MCF 10A (cell line): ENCODE measurements at regions of chr14 and their contacts with region 1.

Region 1: DNA sequence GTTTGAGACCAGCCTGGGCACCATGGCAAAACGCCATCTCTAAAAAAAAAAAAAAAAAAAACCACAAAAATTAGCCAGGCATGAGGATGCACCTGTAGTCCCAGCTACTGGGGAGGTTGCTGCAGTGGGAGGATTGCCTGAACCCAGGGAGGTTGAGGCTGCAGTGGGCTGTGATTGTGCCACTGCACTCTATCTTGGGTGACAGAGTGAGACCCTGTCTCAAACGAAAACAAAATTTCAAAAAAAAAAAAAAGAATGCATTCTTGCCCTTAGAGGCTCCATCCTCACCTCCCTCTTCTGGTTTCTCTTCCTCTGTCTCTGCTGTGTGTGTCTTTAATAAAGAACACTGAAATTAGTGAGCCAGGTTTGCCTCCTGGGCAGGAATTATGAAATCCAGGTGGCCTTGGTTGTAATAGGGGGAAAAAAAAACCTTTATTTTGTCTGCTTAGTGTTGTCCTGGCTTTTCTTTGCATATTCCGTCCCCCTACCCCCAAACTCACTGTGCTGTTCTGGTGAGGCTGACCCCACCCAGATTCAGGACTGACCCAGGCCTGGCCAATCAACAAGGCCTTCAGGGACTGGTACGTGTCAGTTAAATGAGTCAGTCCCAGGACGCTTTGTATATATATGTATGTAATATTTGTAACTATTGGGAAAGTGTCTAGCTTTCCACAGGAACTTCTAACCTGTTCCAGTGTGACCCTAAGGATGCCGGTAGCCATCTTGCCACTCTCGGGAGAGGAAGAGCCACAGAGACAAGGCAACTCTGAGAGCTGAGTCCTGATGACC is 107.6 kb downstream of the VCPKMT start:
- DNase-seq: peak; percentile 96
- H3K4me3 Mint-ChIP-seq: peak overlapping the region; percentile 69
- H3K27ac Mint-ChIP-seq: peak overlapping the region; percentile 96
- H3K4me1 Mint-ChIP-seq: peaks cover 29% of the 10 kb centered on the region
- H3K27me3 Mint-ChIP-seq: no peaks in the 10 kb centered on the region
- CTCF ChIP-seq: no peak

Region 2: GRCh38 chr14:49959822-49960408 is 48.8 kb before region 1 on chr14:
- CTCF ChIA-PET with region 1: interaction called, 7 read pairs
- POLR2A ChIA-PET with region 1: interaction called, 222 read pairs
- intact Hi-C with region 1: loop called (anchors 5 kb)
- DNase-seq: no peak
- H3K4me3 Mint-ChIP-seq: no peak overlapping the region
- H3K27ac Mint-ChIP-seq: no peak overlapping the region
- H3K4me1 Mint-ChIP-seq: peaks cover 31% of the 10 kb centered on the region
- H3K27me3 Mint-ChIP-seq: no peaks in the 10 kb centered on the region
- CTCF ChIP-seq: no peak

Region 3: GRCh38 chr14:49971156-49972130 is 37.3 kb before region 1 on chr14:
- CTCF ChIA-PET with region 1: interaction called, 36 read pairs
- POLR2A ChIA-PET with region 1: interaction called, 27 read pairs
- intact Hi-C with region 1: no loop called
- DNase-seq: peak; percentile 80
- H3K4me3 Mint-ChIP-seq: peak overlapping the region; percentile 58
- H3K27ac Mint-ChIP-seq: peak overlapping the region; percentile 89
- H3K4me1 Mint-ChIP-seq: peaks cover 48% of the 10 kb centered on the region
- H3K27me3 Mint-ChIP-seq: no peaks in the 10 kb centered on the region
- CTCF ChIP-seq: no peak

Region 4: DNA sequence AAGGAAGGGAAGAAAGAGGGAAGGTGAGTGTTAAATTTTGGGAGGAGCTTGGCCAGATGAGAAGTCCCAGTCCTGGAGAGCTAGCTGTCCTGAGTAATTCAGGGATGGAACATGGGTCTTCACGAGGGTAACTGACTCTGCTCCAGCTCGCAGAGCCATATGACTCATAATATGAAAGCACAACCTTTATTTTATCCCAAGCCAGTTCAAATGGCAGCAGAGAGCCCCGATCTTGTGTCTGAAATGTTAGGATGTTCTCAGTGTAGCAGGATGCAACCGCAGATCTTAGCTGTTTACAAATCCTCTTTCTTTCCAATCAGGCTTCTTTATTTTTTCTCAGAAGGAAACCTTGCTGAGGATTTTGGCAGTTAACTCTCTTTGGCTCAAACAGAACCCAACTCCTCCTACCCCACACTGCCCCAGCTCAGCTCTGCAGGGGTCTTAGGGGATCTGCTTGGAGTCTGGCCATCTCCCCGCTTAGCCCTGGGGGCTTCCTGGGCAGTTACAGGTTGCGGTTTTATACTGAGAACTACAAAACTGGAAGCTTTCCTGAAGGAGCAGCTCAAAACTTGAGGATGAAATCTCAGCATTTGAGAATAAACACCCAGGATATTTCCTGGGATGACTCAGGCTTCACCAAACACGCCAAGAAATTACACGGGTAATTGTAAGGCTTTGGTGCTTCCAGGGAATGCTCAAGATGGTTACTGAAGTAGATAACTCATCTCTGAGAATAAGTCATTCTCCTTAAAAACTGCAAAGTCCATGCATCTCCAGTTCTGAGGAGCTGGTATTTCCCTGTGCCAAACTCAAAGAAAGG is 15.1 kb after region 1 on chr14:
- CTCF ChIA-PET with region 1: interaction called, 10 read pairs
- POLR2A ChIA-PET with region 1: interaction called, 44 read pairs
- intact Hi-C with region 1: no loop called
- DNase-seq: peak; percentile 78
- H3K4me3 Mint-ChIP-seq: no peak overlapping the region
- H3K27ac Mint-ChIP-seq: peak overlapping the region; percentile 90
- H3K4me1 Mint-ChIP-seq: peaks cover 15% of the 10 kb centered on the region
- H3K27me3 Mint-ChIP-seq: no peaks in the 10 kb centered on the region
- CTCF ChIP-seq: no peak

Region 5: GRCh38 chr14:50038398-50039119 is 29.8 kb after region 1 on chr14:
- CTCF ChIA-PET with region 1: interaction called, 4 read pairs
- POLR2A ChIA-PET with region 1: interaction called, 95 read pairs
- intact Hi-C with region 1: loop called (anchors 1 kb)
- DNase-seq: peak; percentile 94
- H3K4me3 Mint-ChIP-seq: peak overlapping the region; percentile 40
- H3K27ac Mint-ChIP-seq: peak overlapping the region; percentile 89
- H3K4me1 Mint-ChIP-seq: peaks cover 43% of the 10 kb centered on the region
- H3K27me3 Mint-ChIP-seq: no peaks in the 10 kb centered on the region
- CTCF ChIP-seq: peak; percentile 16

Region 6: DNA sequence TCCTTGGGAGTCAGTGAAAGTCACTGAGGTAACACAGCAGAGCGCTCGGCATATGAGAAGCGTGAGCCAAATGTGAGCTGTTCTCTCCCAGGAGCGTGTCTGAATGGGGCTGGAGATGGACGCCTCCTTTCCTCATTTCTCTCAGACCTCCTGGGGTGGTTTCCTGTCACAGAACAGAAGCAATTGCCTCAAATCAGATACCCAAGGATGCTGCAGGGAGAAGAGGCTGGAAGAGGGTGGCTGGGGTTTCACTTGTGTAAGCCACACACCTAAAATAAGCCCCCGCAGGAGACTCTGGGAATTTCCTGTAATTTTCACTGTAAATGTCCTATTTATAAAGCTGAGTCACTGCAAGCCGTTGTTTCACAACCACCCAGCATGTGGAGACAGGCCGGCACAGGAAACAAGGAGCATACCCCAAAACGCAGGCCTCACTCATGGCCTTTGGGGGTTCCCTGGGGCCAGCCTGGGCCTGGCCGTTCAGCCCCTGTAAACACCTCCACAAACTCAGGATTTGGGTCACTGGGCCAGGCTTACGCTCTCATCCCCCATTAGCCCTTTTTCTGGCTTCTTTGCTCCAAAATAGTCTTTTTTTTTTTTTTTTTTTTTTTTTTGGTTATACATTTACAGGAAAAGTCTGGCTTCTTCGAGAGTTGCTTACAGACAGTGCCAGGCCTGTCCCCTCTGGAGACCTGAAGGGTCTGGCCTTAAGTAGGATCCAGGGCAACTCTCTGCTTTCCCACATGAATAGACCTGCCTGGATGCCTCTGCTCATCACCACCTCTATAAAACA is 52.3 kb after region 1 on chr14:
- CTCF ChIA-PET with region 1: interaction called, 6 read pairs
- POLR2A ChIA-PET with region 1: interaction called, 17 read pairs
- intact Hi-C with region 1: loop called (anchors 2 kb)
- DNase-seq: peak; percentile 96
- H3K4me3 Mint-ChIP-seq: no peak overlapping the region
- H3K27ac Mint-ChIP-seq: peak overlapping the region; percentile 84
- H3K4me1 Mint-ChIP-seq: peaks cover 20% of the 10 kb centered on the region
- H3K27me3 Mint-ChIP-seq: no peaks in the 10 kb centered on the region
- CTCF ChIP-seq: no peak

Region 7: GRCh38 chr14:50082784-50083466 is 74.2 kb after region 1 on chr14:
- CTCF ChIA-PET with region 1: interaction called, 3 read pairs
- POLR2A ChIA-PET with region 1: interaction called, 16 read pairs
- intact Hi-C with region 1: no loop called
- DNase-seq: no peak
- H3K4me3 Mint-ChIP-seq: no peak overlapping the region
- H3K27ac Mint-ChIP-seq: no peak overlapping the region
- H3K4me1 Mint-ChIP-seq: peaks cover 26% of the 10 kb centered on the region
- H3K27me3 Mint-ChIP-seq: no peaks in the 10 kb centered on the region
- CTCF ChIP-seq: no peak